Activated naive CD4-positive, alpha-beta T cell treated with anti-CD3 and anti-CD28 coated beads for 36 hours (primary cell): ENCODE measurements at regions of chr14 and their contacts with region 1.

Region 1: DNA sequence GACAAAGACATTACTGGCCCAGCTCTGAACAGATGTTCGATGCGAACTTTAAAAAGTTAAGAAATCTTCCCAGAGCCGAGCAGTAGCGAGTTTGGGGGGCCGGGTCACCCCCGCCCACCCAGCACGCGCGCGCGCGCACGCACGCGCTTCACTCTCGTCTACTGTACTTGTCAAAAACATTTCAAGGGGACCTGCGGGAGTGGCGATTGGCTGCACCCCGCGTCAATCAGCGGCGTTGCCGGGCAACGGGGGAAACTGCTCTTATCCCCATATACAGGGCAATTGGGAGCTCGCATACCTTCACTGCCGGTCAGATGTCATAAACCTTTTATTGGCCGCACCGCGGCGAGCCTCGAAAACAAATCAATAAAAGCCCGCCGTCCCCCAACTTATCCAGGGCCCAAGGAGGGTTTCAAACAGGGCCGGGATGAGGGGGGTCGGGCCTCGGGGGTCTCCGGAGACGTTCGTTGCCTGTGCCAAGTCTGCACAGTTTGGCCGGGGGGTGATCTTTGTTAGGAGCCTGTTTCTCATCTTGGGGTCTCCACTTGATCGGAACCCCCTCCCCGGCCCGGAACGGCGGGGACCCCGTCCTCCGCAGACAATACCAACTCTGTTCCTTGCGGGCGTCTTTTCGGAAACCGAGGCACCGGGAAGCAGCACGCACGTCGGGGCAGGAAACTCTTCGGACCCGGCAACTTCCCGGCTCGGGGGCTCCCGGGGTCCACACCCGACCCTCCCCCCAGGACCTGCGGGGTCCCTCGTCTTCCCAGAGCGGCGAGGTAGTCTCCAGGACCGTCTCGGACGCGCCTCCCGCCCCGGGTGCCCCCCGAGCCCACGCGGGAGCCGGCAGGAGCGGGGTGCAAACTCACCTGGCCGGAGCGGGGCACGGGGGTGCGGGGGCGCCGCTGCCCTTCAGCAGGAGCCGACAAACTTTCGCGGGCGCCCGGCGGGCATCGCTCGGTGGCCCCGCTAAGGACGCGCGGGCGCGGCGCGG is 734 bp downstream of the FOXN3 start:
- DNase-seq: peak; percentile 98
- H3K4me3 Mint-ChIP-seq: peak overlapping the region; percentile 83
- H3K27ac Mint-ChIP-seq: peak overlapping the region; percentile 87
- H3K4me1 Mint-ChIP-seq: peaks cover 53% of the 10 kb centered on the region
- H3K27me3 Mint-ChIP-seq: no peaks in the 10 kb centered on the region

Region 2: GRCh38 chr14:89027097-89027740 is 389.1 kb before region 1 on chr14:
- CTCF ChIA-PET with region 1: no interaction called
- intact Hi-C with region 1: loop called (anchors 5 kb)
- DNase-seq: peak; percentile 50
- H3K4me3 Mint-ChIP-seq: peak overlapping the region; percentile 59
- H3K27ac Mint-ChIP-seq: no peak overlapping the region
- H3K4me1 Mint-ChIP-seq: no peaks in the 10 kb centered on the region
- H3K27me3 Mint-ChIP-seq: peaks cover 50% of the 10 kb centered on the region

Region 3: GRCh38 chr14:89178802-89179535 is 237.3 kb before region 1 on chr14:
- CTCF ChIA-PET with region 1: no interaction called
- intact Hi-C with region 1: loop called (anchors 1 kb)
- DNase-seq: no peak
- H3K4me3 Mint-ChIP-seq: no peak overlapping the region
- H3K27ac Mint-ChIP-seq: no peak overlapping the region
- H3K4me1 Mint-ChIP-seq: peaks cover 9% of the 10 kb centered on the region
- H3K27me3 Mint-ChIP-seq: no peaks in the 10 kb centered on the region

Region 4: DNA sequence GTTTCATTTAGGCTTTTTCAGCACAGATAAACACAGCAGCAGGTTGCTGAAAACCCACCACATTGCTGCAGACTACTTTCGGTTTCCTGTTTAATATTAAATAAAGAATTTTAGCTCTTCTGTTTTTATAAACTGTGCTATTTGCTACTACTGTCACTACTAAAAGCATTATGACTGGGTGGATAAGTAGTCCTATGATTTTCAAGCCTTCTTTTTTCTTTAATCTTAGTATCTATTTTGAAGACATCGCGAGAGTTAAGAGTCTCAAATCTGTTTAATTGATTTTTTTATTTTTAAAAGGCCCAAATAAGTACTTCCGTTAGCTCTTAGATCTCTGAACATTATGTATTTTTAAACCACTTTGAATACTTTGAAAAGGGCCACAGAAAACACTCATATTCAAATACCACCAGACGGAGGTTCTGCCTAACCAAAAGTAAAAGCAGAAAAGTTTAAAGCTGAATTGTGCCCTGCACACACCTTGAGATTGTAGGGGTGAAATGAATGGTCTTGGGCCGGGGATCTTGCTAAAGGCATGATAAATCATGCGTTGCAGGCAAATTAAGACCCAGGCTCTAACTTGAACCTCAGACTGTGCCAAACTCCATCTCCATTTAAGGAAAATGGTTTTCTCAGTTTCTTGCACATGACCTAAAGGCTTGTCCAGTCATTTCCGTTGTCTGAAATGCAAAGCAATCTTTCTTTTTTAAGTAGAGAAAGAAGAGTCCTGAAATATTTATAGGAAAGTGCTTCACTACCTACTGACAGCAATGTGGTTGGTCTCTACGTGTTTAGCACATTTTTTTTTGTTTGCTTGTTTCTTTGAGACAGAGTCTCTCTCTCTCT is 14.3 kb after region 1 on chr14:
- CTCF ChIA-PET with region 1: no interaction called
- intact Hi-C with region 1: loop called (anchors 1 kb)
- DNase-seq: peak; percentile 80
- H3K4me3 Mint-ChIP-seq: peak overlapping the region; percentile 81
- H3K27ac Mint-ChIP-seq: peak overlapping the region; percentile 96
- H3K4me1 Mint-ChIP-seq: peaks cover 70% of the 10 kb centered on the region
- H3K27me3 Mint-ChIP-seq: no peaks in the 10 kb centered on the region

Region 5: DNA sequence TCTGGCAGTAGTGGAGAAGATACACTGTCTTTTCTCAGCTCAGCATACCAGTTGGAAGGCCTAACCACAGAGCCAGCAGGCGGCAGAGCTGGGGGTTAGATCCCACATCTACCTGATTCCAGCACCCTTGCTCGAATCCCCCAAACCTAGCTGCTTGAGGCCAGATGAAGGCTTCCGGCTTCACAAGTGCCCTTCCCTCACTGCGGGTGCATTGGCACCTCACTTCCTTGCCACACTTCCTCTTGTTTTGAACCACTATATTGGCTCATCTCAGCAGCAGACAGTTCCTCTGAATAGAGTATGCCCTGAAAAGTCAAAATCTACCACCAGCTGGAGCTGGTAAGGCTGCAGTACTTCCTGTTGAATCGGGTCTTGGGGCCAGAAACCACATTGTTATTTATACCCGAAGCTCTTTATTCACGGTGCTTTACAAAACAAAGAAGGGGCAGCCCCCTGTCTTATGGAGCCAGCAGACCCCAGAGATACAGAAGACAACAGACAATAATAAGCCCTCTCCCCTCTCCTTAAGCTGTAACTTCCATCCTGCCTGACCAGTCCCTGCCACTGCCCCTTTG is 304.5 kb after region 1 on chr14:
- CTCF ChIA-PET with region 1: no interaction called
- intact Hi-C with region 1: loop called (anchors 2 kb)
- DNase-seq: peak; percentile 76
- H3K4me3 Mint-ChIP-seq: peak overlapping the region; percentile 32
- H3K27ac Mint-ChIP-seq: peak overlapping the region; percentile 95
- H3K4me1 Mint-ChIP-seq: peaks cover 68% of the 10 kb centered on the region
- H3K27me3 Mint-ChIP-seq: no peaks in the 10 kb centered on the region

Region 6: GRCh38 chr14:89915114-89915878 is 499.0 kb after region 1 on chr14:
- CTCF ChIA-PET with region 1: no interaction called
- intact Hi-C with region 1: loop called (anchors 2 kb)
- DNase-seq: peak; percentile 79
- H3K4me3 Mint-ChIP-seq: no peak overlapping the region
- H3K27ac Mint-ChIP-seq: no peak overlapping the region
- H3K4me1 Mint-ChIP-seq: no peaks in the 10 kb centered on the region
- H3K27me3 Mint-ChIP-seq: peaks cover 3% of the 10 kb centered on the region